Gastrocnemius medialis (tissue), 4 donors: ENCODE measurements at regions of chr1 and their contacts with region 1.

Region 1: DNA sequence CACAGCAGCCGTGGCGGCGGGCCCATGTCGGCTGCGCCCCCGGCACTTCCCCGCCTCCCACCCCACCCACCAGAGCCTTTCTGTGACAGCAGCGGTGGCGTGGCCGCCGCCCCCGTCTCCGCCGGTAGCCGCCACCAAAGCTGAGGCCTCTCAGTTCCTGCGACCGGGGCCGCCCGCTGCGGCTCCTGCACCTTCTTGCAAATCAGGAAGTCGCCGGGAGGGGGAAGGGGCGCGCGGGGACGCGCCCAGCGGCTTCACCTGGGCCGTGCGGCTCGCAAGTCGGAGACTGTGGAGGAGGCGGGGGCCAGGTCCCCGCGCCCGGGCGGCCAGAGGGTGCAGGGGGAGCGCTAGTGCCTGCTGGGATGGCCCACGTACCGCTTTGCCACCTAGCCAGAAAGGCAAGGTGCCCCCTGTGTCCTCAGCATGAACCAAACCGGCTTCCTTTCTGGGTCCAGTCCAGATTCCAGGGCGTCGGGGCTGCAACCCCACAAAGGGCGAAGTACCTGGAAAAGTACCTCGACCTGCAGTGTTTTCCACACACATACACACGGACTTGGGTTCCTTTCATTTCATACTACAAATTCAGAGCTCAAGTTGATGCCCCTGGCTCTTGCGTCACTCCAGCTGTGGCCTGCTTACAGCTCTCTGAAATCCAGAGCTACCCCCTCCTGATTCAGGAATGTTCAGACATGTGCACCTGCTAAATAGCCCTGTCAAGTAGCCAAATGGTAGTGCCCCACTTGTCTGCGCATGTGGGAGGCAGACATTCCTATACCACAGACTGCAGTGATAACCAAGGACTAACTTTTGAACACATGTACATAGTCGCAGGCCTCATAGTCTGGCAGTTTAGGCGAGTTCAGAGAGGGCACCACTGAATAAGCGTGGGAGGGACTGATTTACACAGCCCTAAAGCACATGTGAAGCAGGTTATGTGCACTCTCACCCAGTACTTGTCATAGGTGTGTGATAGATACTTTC is at the start of gene DENND1B:
- DNase-seq: peak; percentile 34 to 57
- ATAC-seq: peak; percentile 58 to 68
- H3K4me3 ChIP-seq: peak within 1 kb of the TSS; percentile 63 to 84 (median 70)
- H3K27ac ChIP-seq: peak within 1 kb of the TSS; percentile 76 to 90 (median 80)
- H3K4me1 ChIP-seq: peaks cover 26 to 35% of the 10 kb centered on the region in 2 donors
- H3K27me3 ChIP-seq: no peaks in the 10 kb centered on the region
- CTCF ChIP-seq: peak in 2 of 5 experiments; percentile 11 to 28
- POLR2A ChIP-seq: no peak
- total RNA-seq, gene DENND1B: 3.3 to 21.7 (median 8.9) TPM

Region 2: DNA sequence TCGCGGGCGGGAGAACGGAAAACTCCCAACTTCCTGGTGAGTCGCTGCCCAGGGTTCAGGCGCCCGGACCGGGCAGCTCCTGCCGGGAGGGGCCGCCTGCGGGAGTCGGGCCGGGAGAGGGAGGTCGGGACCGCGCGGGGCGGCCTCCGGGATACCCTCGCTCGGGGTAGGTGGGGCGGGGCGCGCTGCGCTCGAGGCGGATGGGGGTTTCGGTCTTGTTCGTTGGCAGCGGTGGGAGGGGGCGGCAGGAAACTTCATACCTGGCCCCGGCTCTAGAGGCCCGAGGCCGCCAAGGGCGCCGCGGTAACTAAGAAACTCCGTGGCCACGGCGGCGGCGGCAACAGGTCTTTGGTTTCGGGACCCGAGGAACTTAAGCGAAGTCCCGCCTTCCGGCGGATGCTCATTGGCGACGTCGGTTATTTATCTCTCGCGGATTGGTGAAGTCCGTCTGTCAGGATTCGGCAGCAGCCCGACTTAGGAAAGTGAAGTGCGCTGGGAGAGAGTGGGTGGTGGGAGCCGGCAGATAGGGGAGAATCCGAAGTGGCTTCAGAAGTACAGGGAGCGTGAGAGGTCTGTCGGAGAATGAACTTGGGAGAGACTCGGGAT is 381.8 kb after region 1 on chr1:
- in situ Hi-C with region 1: no loop called
- intact Hi-C with region 1: loop called (anchors 10 kb)
- DNase-seq: peak; percentile 91
- ATAC-seq: peak; percentile 76 to 82
- H3K4me3 ChIP-seq: peak overlapping the region; percentile 85 to 96 (median 94)
- H3K27ac ChIP-seq: peak overlapping the region; percentile 97 to 100 (median 98)
- H3K4me1 ChIP-seq: peaks cover 39 to 59% of the 10 kb centered on the region in 2 donors
- H3K27me3 ChIP-seq: no peaks in the 10 kb centered on the region
- CTCF ChIP-seq: no peak
- POLR2A ChIP-seq: peak; percentile 53 to 82